ENCODE measurements at regions of chr2 and their contacts with region 1.

Region 1: GRCh38 chr2:218733171-218734021 is 22.8 kb downstream of the TTLL4 start:
- DNase-seq: no peak
- H3K4me3 ChIP-seq: no peak overlapping the region
- H3K27ac ChIP-seq: peak overlapping the region; percentile 44
- H3K4me1 ChIP-seq: peaks cover 29% of the 10 kb centered on the region
- H3K27me3 ChIP-seq: no peaks in the 10 kb centered on the region
- CTCF ChIP-seq: no peak

Region 2: GRCh38 chr2:218832520-218832919 is 99.1 kb after region 1 on chr2:
- intact Hi-C with region 1: loop called (anchors 10 kb)
- DNase-seq: peak; percentile 59
- H3K4me3 ChIP-seq: no peak overlapping the region
- H3K27ac ChIP-seq: peak overlapping the region; percentile 86
- H3K4me1 ChIP-seq: peaks cover 6% of the 10 kb centered on the region
- H3K27me3 ChIP-seq: peaks cover 80% of the 10 kb centered on the region
- CTCF ChIP-seq: no peak